ENCODE measurements at regions of chr12 and their contacts with region 1.

Region 1: DNA sequence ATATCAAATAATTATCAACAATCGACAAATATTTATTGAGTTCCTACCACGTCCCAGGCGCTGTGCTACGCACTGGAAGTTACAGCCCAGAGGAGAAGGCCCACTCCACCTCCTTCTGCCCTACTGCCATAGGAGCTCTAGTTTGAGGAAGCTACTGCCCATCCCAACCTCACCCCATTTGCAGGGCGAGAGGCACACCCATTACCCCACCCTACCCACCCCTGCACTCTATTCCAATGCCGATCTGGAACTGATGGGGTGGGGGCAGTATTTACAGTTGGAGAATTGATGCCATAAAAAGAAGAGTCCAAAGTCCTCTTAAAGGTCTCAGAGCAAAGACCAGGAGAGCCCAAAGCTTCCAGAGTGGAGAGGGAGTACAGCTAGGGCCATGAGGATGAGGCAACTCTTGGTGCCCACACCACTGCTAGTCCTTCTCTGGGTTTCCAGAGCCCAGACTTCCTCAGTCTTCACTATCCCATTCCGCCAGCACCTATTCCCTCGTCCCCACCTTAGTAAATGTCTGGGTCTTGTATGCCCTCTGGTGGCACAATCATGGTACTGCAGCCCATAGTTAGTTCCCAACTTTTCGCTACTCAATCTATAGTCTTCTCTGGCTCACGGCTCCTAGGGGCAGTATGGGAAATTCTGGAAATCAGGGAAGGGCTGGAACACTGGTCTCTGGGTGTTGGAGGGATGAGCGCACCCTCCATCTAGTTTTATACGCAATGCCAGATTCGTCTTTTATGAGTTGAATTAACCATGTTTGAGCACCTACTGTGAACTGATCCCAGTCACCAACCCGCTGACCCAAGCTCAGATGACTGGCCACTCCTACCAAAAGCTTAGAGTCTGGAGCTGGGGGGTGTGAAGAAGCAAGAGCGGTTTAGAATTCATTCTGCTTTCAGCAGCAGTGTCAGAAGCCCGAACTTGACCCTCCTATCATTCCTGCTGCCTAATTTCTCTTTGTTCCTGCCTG is 6.9 kb upstream of the ADCY6 start:
- DNase-seq: no peak

Region 2: GRCh38 chr12:48758221-48758620 is 37.5 kb before region 1 on chr12:
- intact Hi-C with region 1: loop called (anchors 1 kb)
- DNase-seq: no peak

Region 3: DNA sequence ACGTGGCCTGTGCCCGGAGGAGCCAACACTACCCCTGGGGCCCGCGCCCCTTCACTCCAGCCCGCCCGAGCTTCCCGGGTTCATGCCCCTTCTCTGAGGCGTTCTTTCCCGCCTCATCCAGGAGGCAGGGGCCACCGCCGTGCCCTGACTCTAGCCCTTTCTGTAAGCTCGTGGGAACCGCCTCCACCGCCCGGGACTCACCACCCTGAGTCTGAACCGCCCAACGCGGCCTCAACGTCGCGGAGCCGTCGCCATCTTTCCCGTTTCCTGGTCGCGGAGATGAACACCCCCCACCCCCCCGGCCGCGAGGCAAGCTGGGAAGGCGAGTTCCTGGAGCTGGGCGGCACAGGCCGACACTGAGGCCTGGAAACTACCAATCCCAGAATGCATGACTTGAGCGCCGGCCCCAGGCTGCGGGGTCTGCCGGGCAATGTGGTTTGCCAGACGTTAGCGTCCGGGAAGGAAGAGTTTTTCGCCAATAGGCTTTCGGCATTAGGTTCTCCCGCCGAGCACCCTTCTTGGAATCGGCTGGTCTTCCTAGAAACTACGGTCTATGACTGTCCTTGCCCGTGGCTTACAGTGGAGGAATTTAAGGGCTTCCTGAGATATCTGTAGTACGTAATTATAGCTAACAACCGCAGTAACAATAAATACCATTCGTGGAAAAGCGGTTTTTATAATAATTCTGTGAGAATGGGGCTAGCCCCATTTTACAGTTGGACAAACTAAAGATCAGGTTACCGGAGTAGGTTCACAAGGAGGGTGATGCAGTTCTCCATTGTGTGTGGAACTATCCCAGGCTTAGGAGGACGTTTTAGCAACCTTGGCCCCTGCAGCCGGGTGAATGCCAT is 56.3 kb after region 1 on chr12 and contains the start of gene DDX23:
- intact Hi-C with region 1: no loop called
- DNase-seq: peak; percentile 97
- total RNA-seq, gene DDX23: 33.3 TPM

Measured in cardiac septum (tissue), 1 donor.